Keratinocyte (primary cell): ENCODE measurements at regions of chr11 and their contacts with region 1.

Region 1: GRCh38 chr11:99987821-99988470 is 699.1 kb upstream of the ARHGAP42 start:
- DNase-seq: no peak
- H3K4me3 ChIP-seq: no peak overlapping the region
- H3K27ac ChIP-seq: no peak overlapping the region
- H3K4me1 ChIP-seq: no peaks in the 10 kb centered on the region
- H3K27me3 ChIP-seq: no peaks in the 10 kb centered on the region
- CTCF ChIP-seq: no peak

Region 2: GRCh38 chr11:99803501-99803900 is 184.4 kb before region 1 on chr11:
- dilution Hi-C with region 1: no loop called
- DNase-seq: no peak
- H3K4me3 ChIP-seq: no peak overlapping the region
- H3K27ac ChIP-seq: no peak overlapping the region
- H3K4me1 ChIP-seq: no peaks in the 10 kb centered on the region
- H3K27me3 ChIP-seq: no peaks in the 10 kb centered on the region
- CTCF ChIP-seq: no peak

Region 3: GRCh38 chr11:99920956-99921355 is 67.0 kb before region 1 on chr11:
- dilution Hi-C with region 1: loop called (anchors 5 kb)
- DNase-seq: no peak
- H3K4me3 ChIP-seq: no peak overlapping the region
- H3K27ac ChIP-seq: no peak overlapping the region
- H3K4me1 ChIP-seq: no peaks in the 10 kb centered on the region
- H3K27me3 ChIP-seq: no peaks in the 10 kb centered on the region
- CTCF ChIP-seq: no peak